CD8-positive, alpha-beta T cell (primary cell): ENCODE measurements at regions of chr13 and their contacts with region 1.

Region 1: GRCh38 chr13:52968074-52968700 is 60.4 kb upstream of the OLFM4 start:
- DNase-seq: peak; percentile 14 to 67 (median 55)
- ATAC-seq: peak; percentile 75
- H3K4me3 ChIP-seq: no peak overlapping the region
- H3K4me3 Mint-ChIP-seq: no peak overlapping the region
- H3K27ac ChIP-seq: no peak overlapping the region
- H3K27ac Mint-ChIP-seq: no peak overlapping the region
- H3K4me1 ChIP-seq: no peaks in the 10 kb centered on the region
- H3K4me1 Mint-ChIP-seq: no peaks in the 10 kb centered on the region
- H3K27me3 ChIP-seq: no peaks in the 10 kb centered on the region
- H3K27me3 Mint-ChIP-seq: peaks cover 12% of the 10 kb centered on the region
- CTCF ChIP-seq: peak; percentile 69

Region 2: GRCh38 chr13:52797176-52797575 is 171.0 kb before region 1 on chr13:
- CTCF ChIA-PET with region 1: no interaction called
- POLR2A ChIA-PET with region 1: no interaction called
- intact Hi-C with region 1: no loop called
- DNase-seq: no peak
- ATAC-seq: no peak
- H3K4me3 ChIP-seq: no peak overlapping the region
- H3K4me3 Mint-ChIP-seq: no peak overlapping the region
- H3K27ac ChIP-seq: no peak overlapping the region
- H3K27ac Mint-ChIP-seq: no peak overlapping the region
- H3K4me1 ChIP-seq: no peaks in the 10 kb centered on the region
- H3K4me1 Mint-ChIP-seq: no peaks in the 10 kb centered on the region
- H3K27me3 ChIP-seq: no peaks in the 10 kb centered on the region
- H3K27me3 Mint-ChIP-seq: peaks cover 3% of the 10 kb centered on the region
- CTCF ChIP-seq: no peak

Region 3: GRCh38 chr13:52955472-52955874 is 12.7 kb before region 1 on chr13:
- CTCF ChIA-PET with region 1: interaction called, 10 read pairs
- POLR2A ChIA-PET with region 1: no interaction called
- intact Hi-C with region 1: no loop called
- DNase-seq: no peak
- ATAC-seq: no peak
- H3K4me3 ChIP-seq: no peak overlapping the region
- H3K4me3 Mint-ChIP-seq: no peak overlapping the region
- H3K27ac ChIP-seq: no peak overlapping the region
- H3K27ac Mint-ChIP-seq: no peak overlapping the region
- H3K4me1 ChIP-seq: no peaks in the 10 kb centered on the region
- H3K4me1 Mint-ChIP-seq: no peaks in the 10 kb centered on the region
- H3K27me3 ChIP-seq: no peaks in the 10 kb centered on the region
- H3K27me3 Mint-ChIP-seq: peaks cover 4% of the 10 kb centered on the region
- CTCF ChIP-seq: no peak

Region 4: DNA sequence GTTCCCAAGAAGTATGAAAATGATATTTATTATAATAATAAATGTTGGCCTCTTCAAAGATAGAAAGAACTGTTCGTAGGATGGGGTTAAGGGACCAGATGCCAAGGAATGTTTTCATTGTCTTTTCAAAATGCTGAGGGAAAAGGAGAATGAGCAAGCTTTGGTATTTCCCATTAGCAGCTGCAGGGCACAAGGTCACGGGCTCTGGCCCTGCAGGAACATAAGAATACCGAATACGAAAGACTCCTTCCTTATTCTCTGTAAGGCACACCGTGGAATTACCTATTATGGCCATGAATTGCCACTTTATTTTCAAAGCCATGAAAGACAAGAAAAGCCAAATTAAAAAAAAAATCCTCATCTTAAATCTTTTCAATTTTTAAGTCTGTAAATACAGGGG is 10.8 kb after region 1 on chr13:
- CTCF ChIA-PET with region 1: interaction called, 19 read pairs
- POLR2A ChIA-PET with region 1: interaction called, 4 read pairs
- intact Hi-C with region 1: no loop called
- DNase-seq: no peak
- ATAC-seq: no peak
- H3K4me3 ChIP-seq: no peak overlapping the region
- H3K4me3 Mint-ChIP-seq: no peak overlapping the region
- H3K27ac ChIP-seq: no peak overlapping the region
- H3K27ac Mint-ChIP-seq: no peak overlapping the region
- H3K4me1 ChIP-seq: no peaks in the 10 kb centered on the region
- H3K4me1 Mint-ChIP-seq: no peaks in the 10 kb centered on the region
- H3K27me3 ChIP-seq: no peaks in the 10 kb centered on the region
- H3K27me3 Mint-ChIP-seq: peaks cover 11% of the 10 kb centered on the region
- CTCF ChIP-seq: no peak